Esophagus muscularis mucosa (tissue), 4 donors: ENCODE measurements at regions of chr5 and their contacts with region 1.

Region 1: GRCh38 chr5:95961617-95962474 is at the start of gene ELL2:
- DNase-seq: peak; percentile 100
- H3K4me3 ChIP-seq: peak within 1 kb of the TSS; percentile 90 to 96 (median 94)
- H3K27ac ChIP-seq: peak within 1 kb of the TSS; percentile 98 to 100 (median 99)
- H3K4me1 ChIP-seq: peaks cover 0 to 41% (median 33%) of the 10 kb centered on the region in 4 donors
- H3K27me3 ChIP-seq: no peaks in the 10 kb centered on the region
- CTCF ChIP-seq: no peak
- EP300 ChIP-seq: peak; percentile 100
- POLR2A ChIP-seq: peak; percentile 87
- total RNA-seq, gene ELL2: 38.8 to 51.5 (median 42.7) TPM

Region 2: GRCh38 chr5:95664204-95664786 is 297.6 kb before region 1 on chr5:
- intact Hi-C with region 1: loop called (anchors 10 kb)
- DNase-seq: no peak
- H3K4me3 ChIP-seq: no peak overlapping the region
- H3K27ac ChIP-seq: peak overlapping the region; percentile 22 to 62 (median 52)
- H3K4me1 ChIP-seq: peaks cover 9 to 17% (median 13%) of the 10 kb centered on the region in 4 donors
- H3K27me3 ChIP-seq: no peaks in the 10 kb centered on the region
- CTCF ChIP-seq: peak; percentile 78 to 87 (median 79)
- EP300 ChIP-seq: no peak
- POLR2A ChIP-seq: no peak

Region 3: DNA sequence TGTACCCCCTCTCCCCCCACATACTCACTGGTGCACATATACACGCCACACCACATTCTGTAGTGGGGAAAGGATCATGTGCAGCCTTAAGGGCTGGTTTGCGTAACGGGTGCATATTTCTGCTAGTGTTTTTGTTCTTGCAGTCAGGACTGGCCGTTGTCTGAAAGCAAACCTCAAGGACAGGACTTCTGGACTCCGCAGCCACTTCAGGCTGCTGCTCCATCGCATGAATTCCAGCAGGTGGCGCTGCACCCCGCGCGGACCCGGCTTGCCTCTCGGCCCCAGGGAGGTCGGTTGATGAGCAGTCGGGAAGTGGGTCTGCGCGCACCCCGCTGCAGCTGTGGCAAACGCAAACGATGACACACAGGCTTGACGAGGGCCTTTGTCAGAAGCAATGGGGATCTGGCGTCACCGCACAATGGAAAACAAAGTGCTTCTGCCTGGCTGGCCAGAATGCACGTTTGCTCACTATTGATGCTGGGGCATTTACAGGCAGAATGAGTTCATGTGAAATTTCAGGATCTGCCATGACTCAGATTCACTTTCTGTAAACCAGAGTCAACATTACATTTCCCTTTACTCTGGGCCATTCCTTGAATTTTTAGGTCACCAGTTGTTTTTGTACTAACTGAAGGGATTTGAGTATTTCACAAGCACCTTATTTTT is 103.1 kb before region 1 on chr5:
- intact Hi-C with region 1: loop called (anchors 5 kb)
- DNase-seq: peak; percentile 98
- H3K4me3 ChIP-seq: peak overlapping the region; percentile 37 to 55 (median 44)
- H3K27ac ChIP-seq: peak overlapping the region; percentile 82 to 88 (median 84)
- H3K4me1 ChIP-seq: peaks cover 48 to 75% (median 59%) of the 10 kb centered on the region in 4 donors
- H3K27me3 ChIP-seq: no peaks in the 10 kb centered on the region
- CTCF ChIP-seq: peak in 2 of 3 experiments; percentile 98 to 99
- EP300 ChIP-seq: peak; percentile 82
- POLR2A ChIP-seq: no peak